PC-3 (cell line): ENCODE measurements at regions of chr19 and their contacts with region 1.

Region 1: DNA sequence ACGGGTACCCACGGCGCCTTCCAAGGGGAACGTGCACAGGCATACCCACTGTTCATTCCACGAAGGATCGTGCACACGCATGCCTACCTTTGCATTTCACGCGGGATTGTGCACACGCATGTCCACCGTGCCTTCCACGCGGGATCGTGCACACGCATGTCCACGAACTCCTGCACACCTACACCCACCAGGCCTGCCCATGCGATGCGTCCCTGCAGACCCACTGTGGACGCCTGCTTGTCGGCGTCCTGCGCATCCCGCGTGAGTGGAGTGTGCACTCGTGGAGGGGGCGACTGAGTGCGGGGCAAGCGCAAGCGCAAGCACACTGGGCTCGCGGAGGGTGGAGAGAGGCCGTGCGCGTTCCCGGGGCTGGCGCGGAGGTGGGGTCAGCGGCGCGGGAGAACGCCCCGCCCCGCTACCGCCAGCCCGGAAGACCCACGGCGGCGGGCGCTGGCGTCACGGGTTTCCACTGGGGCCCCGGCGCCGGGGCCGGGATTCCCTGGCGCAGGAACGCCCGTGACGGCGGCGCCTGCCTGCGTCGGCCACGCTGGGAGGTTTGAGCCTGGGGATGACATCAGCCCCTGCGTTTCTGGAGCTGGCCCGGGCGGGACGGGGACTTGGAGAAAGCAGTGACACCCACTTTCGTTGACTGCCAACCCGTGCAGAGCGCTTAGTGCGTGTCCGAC is 18.7 kb downstream of the GADD45B start:
- DNase-seq: peak; percentile 61
- ATAC-seq: peak; percentile 45
- H3K4me3 ChIP-seq: peak overlapping the region; percentile 98
- H3K27ac ChIP-seq: peak overlapping the region; percentile 92
- H3K4me1 ChIP-seq: peaks cover 46% of the 10 kb centered on the region
- H3K27me3 ChIP-seq: no peaks in the 10 kb centered on the region
- CTCF ChIP-seq: no peak

Region 2: DNA sequence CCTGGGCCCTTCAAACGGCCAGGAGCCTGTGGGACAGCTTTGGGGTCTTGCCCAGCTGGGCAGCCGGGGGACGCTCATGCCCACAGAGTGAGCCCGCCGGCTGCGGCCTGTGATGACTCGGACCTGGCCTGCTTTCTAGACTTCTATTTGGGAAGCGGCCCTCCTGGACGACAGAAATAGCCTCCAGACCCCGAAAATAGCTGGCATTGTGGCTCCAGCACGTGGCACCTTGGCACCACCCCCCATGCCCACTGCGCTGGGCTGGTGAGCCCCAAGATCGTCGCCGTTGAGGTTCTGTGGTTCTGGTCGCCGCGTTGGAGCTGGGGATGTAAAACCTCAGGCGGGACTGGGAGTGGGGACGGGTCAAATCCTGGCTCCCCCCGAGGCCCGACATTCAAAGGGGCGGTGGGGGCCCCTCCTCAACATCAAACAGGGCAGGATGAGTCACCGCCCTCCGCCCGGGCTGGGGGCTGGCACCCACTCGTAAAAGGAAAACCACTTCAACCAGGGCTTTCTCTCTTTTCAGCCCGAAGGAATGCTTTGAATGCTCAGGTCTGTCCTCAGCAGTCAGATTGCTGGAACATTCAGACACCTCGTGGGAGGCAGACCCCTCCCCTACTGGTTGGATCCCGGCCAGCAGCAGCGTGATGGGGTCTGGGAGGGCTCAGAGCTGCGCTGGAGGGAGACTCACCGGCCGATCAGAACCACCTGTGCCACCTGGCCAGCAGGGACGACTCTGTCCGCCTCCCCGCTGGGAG is 23.5 kb after region 1 on chr19:
- CTCF ChIA-PET with region 1: no interaction called
- POLR2A ChIA-PET with region 1: no interaction called
- intact Hi-C with region 1: no loop called
- DNase-seq: no peak
- ATAC-seq: no peak
- H3K4me3 ChIP-seq: no peak overlapping the region
- H3K27ac ChIP-seq: no peak overlapping the region
- H3K4me1 ChIP-seq: no peaks in the 10 kb centered on the region
- H3K27me3 ChIP-seq: no peaks in the 10 kb centered on the region
- CTCF ChIP-seq: no peak

Region 3: DNA sequence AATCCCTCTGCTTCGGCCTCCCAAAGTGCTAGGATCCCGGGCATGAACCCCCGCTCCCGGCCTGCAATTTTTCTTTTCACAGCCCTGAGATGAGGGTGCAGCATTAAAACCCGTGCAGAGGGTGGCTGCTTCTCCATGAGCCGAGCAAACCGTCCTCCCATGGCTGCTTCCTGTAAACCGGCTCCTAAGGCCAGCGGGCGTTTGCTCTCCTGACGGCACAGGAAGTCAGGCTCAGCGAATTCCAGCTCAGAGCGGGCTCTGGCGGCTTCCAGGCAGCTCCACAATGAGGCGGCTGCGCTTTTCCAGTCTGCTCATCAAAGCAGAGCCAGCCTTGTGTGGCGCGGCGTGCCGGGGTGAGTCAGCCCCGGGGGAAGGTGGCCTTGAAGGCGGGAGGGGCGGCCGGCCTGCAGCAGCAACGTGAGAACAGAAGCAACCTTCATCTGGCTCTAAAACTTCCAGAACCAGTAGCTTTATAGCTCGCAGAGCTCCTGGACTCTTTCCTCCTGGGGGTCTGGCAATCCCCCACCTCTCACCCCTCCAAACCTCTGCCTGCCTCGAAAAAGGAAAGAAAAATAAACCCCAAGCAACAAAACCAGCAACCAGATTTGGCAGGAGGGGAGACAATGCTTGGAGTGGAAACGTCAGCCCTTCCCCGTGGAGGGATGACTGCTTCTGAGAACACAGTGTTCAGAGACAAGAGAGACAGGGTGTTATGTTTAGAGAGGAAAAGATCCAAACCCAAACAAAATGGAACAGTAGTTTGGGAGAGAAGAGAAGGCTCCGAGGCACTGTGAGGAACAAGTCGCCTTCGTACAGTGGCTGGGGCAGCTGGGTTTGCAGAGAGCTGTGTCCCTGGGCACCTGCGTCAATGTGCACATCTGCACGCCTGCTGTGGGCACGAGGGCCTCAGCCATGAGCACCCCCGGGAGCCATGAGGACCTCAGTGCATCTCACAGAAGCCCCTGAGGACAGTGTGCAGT is 49.2 kb after region 1 on chr19:
- CTCF ChIA-PET with region 1: no interaction called
- POLR2A ChIA-PET with region 1: interaction called, 6 read pairs
- intact Hi-C with region 1: loop called (anchors 2 kb)
- DNase-seq: peak; percentile 94
- ATAC-seq: peak; percentile 79
- H3K4me3 ChIP-seq: peak overlapping the region; percentile 54
- H3K27ac ChIP-seq: peak overlapping the region; percentile 88
- H3K4me1 ChIP-seq: peaks cover 47% of the 10 kb centered on the region
- H3K27me3 ChIP-seq: no peaks in the 10 kb centered on the region
- CTCF ChIP-seq: peak; percentile 35; the same call in 1 of the 2 replicates

Region 4: DNA sequence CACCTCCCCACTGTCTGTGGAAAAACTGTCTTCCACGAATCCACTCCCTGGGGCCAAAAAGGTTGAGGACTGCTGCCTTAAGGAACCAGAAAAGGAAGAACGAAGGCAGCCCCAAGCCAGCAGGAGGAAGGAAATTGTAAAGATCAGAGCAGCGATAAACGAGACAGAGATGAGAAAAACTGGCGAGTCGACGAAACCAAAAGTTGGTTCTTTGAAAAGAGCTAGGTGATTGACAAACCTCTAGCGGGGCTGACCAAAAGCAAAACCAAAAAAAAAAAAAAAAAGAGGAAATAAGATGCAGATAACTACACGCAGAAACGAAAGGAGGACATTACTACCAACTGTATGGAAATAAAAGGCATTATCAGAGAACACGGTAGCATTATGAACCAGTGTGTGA is 58.3 kb after region 1 on chr19:
- CTCF ChIA-PET with region 1: no interaction called
- POLR2A ChIA-PET with region 1: interaction called, 12 read pairs
- intact Hi-C with region 1: no loop called
- DNase-seq: peak; percentile 61
- ATAC-seq: peak; percentile 55
- H3K4me3 ChIP-seq: peak overlapping the region; percentile 67
- H3K27ac ChIP-seq: peak overlapping the region; percentile 6
- H3K4me1 ChIP-seq: peaks cover 27% of the 10 kb centered on the region
- H3K27me3 ChIP-seq: no peaks in the 10 kb centered on the region
- CTCF ChIP-seq: no peak

Region 5: GRCh38 chr19:2578901-2579677 is 84.5 kb after region 1 on chr19:
- CTCF ChIA-PET with region 1: no interaction called
- POLR2A ChIA-PET with region 1: no interaction called
- intact Hi-C with region 1: loop called (anchors 1 kb)
- DNase-seq: peak; percentile 87
- ATAC-seq: peak; percentile 86
- H3K4me3 ChIP-seq: peak overlapping the region; percentile 70
- H3K27ac ChIP-seq: peak overlapping the region; percentile 57
- H3K4me1 ChIP-seq: peaks cover 22% of the 10 kb centered on the region
- H3K27me3 ChIP-seq: no peaks in the 10 kb centered on the region
- CTCF ChIP-seq: peak; percentile 84

Region 6: DNA sequence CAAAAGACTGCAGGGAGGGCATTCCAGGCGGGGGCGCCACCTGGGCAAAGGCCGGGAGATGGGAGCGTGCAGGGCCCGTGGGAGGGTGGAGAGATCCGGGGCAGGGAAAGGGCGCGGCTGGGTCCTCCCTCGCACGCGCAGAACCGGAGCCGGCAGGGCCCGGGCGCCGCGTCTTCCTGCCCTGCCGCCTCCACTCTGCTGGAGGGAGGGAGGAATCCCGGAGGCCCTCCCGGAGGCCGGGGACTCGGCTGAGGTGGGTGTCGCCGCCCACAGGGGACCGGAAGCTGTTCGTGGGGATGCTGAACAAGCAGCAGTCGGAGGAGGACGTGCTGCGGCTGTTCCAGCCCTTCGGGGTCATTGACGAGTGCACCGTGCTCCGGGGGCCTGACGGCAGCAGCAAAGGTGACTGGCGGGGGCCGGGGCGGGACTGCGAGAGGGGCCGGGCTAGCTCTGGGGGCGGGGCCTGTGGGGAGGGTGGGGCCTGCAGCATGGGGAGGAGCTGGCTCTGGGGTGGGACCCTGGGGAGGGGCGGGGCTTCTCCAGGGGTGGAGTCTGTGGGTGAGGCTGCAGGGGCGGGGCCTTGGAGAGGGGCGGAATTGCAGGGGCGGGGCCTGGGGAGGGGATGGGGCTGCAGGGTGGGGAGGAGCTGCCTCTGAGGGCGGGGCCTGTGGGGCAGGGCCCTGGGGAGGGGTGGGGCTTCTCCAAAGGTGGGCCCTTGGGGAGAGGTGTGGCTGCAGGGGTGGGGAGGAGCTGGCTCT is 781.2 kb after region 1 on chr19:
- CTCF ChIA-PET with region 1: no interaction called
- POLR2A ChIA-PET with region 1: interaction called, 12 read pairs
- intact Hi-C with region 1: no loop called
- DNase-seq: peak; percentile 88
- ATAC-seq: peak; percentile 74
- H3K4me3 ChIP-seq: peak overlapping the region; percentile 69
- H3K27ac ChIP-seq: no peak overlapping the region
- H3K4me1 ChIP-seq: 0 out of 2 replicates have a peak, but pooled peaks cover 4% of the 10 kb centered on the region
- H3K27me3 ChIP-seq: no peaks in the 10 kb centered on the region
- CTCF ChIP-seq: peak; percentile 33; the same call in 1 of the 2 replicates